HEK293 (cell line): ENCODE measurements at regions of chr4 and their contacts with region 1.

Region 1: GRCh38 chr4:3765271-3766040 is 729 bp upstream of the ADRA2C start:
- H3K4me3 ChIP-seq: peak overlapping the region; percentile 27
- H3K27ac ChIP-seq: peak overlapping the region; percentile 53; the same call in 1 of the 2 replicates
- H3K4me1 ChIP-seq: no peaks in the 10 kb centered on the region
- CTCF ChIP-seq: no peak

Region 2: GRCh38 chr4:3747581-3747904 is 17.9 kb before region 1 on chr4:
- CTCF ChIA-PET with region 1: interaction called, 10 read pairs
- POLR2A ChIA-PET with region 1: interaction called, 3 read pairs
- H3K4me3 ChIP-seq: no peak overlapping the region
- H3K27ac ChIP-seq: no peak overlapping the region
- H3K4me1 ChIP-seq: 0 out of 2 replicates have a peak, but pooled peaks cover 2% of the 10 kb centered on the region
- CTCF ChIP-seq: no peak

Region 3: GRCh38 chr4:3819210-3819919 is 53.9 kb after region 1 on chr4:
- CTCF ChIA-PET with region 1: no interaction called
- POLR2A ChIA-PET with region 1: no interaction called
- H3K4me3 ChIP-seq: no peak overlapping the region
- H3K27ac ChIP-seq: no peak overlapping the region
- H3K4me1 ChIP-seq: no peaks in the 10 kb centered on the region
- CTCF ChIP-seq: no peak

Region 4: DNA sequence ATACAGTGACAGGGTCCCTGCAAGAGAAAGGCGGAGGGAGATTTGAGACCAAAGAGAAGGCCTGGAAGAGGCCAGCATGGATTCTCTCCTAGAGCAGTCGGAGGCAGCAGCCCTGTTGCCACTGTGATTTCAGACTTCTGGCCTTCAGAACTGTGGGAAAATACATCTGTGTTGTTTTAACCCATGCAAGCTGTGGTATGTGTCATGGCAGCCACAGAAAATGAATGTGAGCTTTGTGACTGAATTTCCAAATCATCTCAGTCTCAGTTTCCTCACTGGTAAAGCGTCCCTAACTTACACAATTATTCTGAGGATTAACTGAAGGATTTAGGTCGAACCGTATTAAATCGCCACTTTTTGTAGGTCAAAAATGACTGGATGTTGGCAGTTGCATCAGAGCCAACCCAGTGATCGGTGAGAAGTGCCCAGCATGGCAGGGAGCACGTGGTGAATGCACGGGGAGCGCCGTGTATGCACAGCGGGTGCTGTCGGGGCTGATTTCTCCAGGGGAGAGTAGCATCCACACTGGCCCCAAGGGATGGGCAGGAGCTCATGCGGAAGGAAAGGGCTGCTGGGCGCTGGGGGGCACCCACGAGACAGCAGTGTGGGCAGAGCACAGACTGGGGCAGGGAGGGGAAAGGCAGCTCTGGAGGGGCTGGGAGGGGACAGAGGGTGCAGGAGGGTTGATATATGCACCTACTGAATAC is 597.7 kb after region 1 on chr4:
- CTCF ChIA-PET with region 1: no interaction called
- POLR2A ChIA-PET with region 1: no interaction called
- H3K4me3 ChIP-seq: no peak overlapping the region
- H3K27ac ChIP-seq: no peak overlapping the region
- H3K4me1 ChIP-seq: no peaks in the 10 kb centered on the region
- CTCF ChIP-seq: no peak